Activated T-helper 1 cell treated with anti-CD3 and anti-CD28 coated beads, Interleukin-12 subunit alpha, Interleukin-12 subunit beta, Interleukin-2, Interleukin-4 antibody, amounts not matched to agents 30 ng/mL and 10 ng/mL and 1 ng/mL, durations not matched to agents 14 hours and 24 hours and 36 hours (primary cell): ENCODE measurements at regions of chr1 and their contacts with region 1.

Region 1: GRCh38 chr1:110053557-110054428 is 16.7 kb downstream of the ALX3 start:
- DNase-seq: peak; percentile 46
- H3K4me3 Mint-ChIP-seq: no peak overlapping the region
- H3K27ac Mint-ChIP-seq: no peak overlapping the region
- H3K4me1 Mint-ChIP-seq: no peaks in the 10 kb centered on the region
- H3K27me3 Mint-ChIP-seq: no peaks in the 10 kb centered on the region

Region 2: GRCh38 chr1:110106013-110106941 is 52.5 kb after region 1 on chr1:
- intact Hi-C with region 1: loop called (anchors 1 kb)
- DNase-seq: peak; percentile 40
- H3K4me3 Mint-ChIP-seq: no peak overlapping the region
- H3K27ac Mint-ChIP-seq: no peak overlapping the region
- H3K4me1 Mint-ChIP-seq: no peaks in the 10 kb centered on the region
- H3K27me3 Mint-ChIP-seq: peaks cover 13% of the 10 kb centered on the region

Region 3: GRCh38 chr1:110118636-110119615 is 65.1 kb after region 1 on chr1:
- intact Hi-C with region 1: loop called (anchors 2 kb)
- DNase-seq: no peak
- H3K4me3 Mint-ChIP-seq: no peak overlapping the region
- H3K27ac Mint-ChIP-seq: no peak overlapping the region
- H3K4me1 Mint-ChIP-seq: no peaks in the 10 kb centered on the region
- H3K27me3 Mint-ChIP-seq: peaks cover 14% of the 10 kb centered on the region